Calu3 (cell line): ENCODE measurements at regions of chr2 and their contacts with region 1.

Region 1: GRCh38 chr2:218876562-218877219 is 4.0 kb upstream of the WNT10A start:
- DNase-seq: peak; percentile 82
- H3K4me3 Mint-ChIP-seq: no peak overlapping the region
- H3K27ac Mint-ChIP-seq: no peak overlapping the region
- H3K4me1 Mint-ChIP-seq: peaks cover 15% of the 10 kb centered on the region
- H3K27me3 Mint-ChIP-seq: peaks cover 65% of the 10 kb centered on the region
- CTCF ChIP-seq: peak; percentile 95

Region 2: GRCh38 chr2:218798767-218799504 is 77.8 kb before region 1 on chr2:
- CTCF ChIA-PET with region 1: no interaction called
- intact Hi-C with region 1: no loop called
- DNase-seq: no peak
- H3K4me3 Mint-ChIP-seq: peak overlapping the region; percentile 38
- H3K27ac Mint-ChIP-seq: peak overlapping the region; percentile 15
- H3K4me1 Mint-ChIP-seq: peaks cover 15% of the 10 kb centered on the region
- H3K27me3 Mint-ChIP-seq: no peaks in the 10 kb centered on the region
- CTCF ChIP-seq: no peak

Region 3: GRCh38 chr2:218892693-218893348 is 16.1 kb after region 1 on chr2:
- CTCF ChIA-PET with region 1: interaction called, 70 read pairs
- intact Hi-C with region 1: loop called (anchors 1 kb)
- DNase-seq: peak; percentile 86
- H3K4me3 Mint-ChIP-seq: peak overlapping the region; percentile 61
- H3K27ac Mint-ChIP-seq: no peak overlapping the region
- H3K4me1 Mint-ChIP-seq: peaks cover 40% of the 10 kb centered on the region
- H3K27me3 Mint-ChIP-seq: no peaks in the 10 kb centered on the region
- CTCF ChIP-seq: peak; percentile 67

Region 4: GRCh38 chr2:218898109-218898878 is 21.6 kb after region 1 on chr2:
- CTCF ChIA-PET with region 1: interaction called, 70 read pairs
- intact Hi-C with region 1: loop called (anchors 1 kb)
- DNase-seq: peak; percentile 82
- H3K4me3 Mint-ChIP-seq: peak overlapping the region; percentile 61
- H3K27ac Mint-ChIP-seq: no peak overlapping the region
- H3K4me1 Mint-ChIP-seq: peaks cover 47% of the 10 kb centered on the region
- H3K27me3 Mint-ChIP-seq: peaks cover 25% of the 10 kb centered on the region
- CTCF ChIP-seq: peak; percentile 99

Region 5: DNA sequence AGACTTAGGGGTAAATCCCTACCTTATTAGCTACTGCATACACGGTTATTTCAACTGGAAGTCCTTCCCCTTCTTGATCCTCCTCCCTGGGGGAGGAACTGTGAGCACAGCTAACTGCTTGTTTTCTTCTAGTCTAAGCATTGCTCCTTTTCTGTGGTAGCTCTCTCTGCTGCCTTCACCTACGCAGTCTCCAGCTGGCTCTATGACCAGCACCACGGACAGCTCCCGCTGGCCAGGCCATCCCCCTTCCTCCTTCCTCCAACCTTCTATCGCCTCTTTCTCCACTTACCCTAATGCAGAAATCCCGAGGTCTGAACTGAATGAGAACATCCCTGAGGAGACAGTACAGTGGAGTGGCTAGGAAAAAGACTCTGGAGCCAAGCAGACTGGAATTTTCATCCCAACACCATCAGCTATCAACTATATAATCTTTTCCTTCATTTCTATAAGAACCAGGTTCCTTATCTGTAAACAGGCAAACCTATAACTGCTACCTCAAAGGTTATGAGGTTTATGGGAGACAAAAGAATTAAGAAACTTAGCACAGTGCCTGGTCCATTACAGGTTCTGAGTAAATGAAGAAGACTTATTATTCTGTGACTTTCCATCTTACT is 169.4 kb after region 1 on chr2:
- CTCF ChIA-PET with region 1: no interaction called
- intact Hi-C with region 1: no loop called
- DNase-seq: peak; percentile 63
- H3K4me3 Mint-ChIP-seq: no peak overlapping the region
- H3K27ac Mint-ChIP-seq: no peak overlapping the region
- H3K4me1 Mint-ChIP-seq: peaks cover 63% of the 10 kb centered on the region
- H3K27me3 Mint-ChIP-seq: no peaks in the 10 kb centered on the region
- CTCF ChIP-seq: no peak

Region 6: GRCh38 chr2:219234331-219234730 is 357.6 kb after region 1 on chr2:
- CTCF ChIA-PET with region 1: no interaction called
- intact Hi-C with region 1: no loop called
- DNase-seq: no peak
- H3K4me3 Mint-ChIP-seq: no peak overlapping the region
- H3K27ac Mint-ChIP-seq: no peak overlapping the region
- H3K4me1 Mint-ChIP-seq: no peaks in the 10 kb centered on the region
- H3K27me3 Mint-ChIP-seq: no peaks in the 10 kb centered on the region
- CTCF ChIP-seq: no peak